PC-3 (cell line): ENCODE measurements at regions of chr11 and their contacts with region 1.

Region 1: GRCh38 chr11:130827451-130828377 is 88.6 kb downstream of the SNX19 start:
- DNase-seq: peak; percentile 93
- ATAC-seq: peak; percentile 95
- H3K4me3 ChIP-seq: no peak overlapping the region
- H3K27ac ChIP-seq: peak overlapping the region; percentile 58
- H3K4me1 ChIP-seq: peaks cover 23% of the 10 kb centered on the region
- H3K27me3 ChIP-seq: no peaks in the 10 kb centered on the region
- CTCF ChIP-seq: peak; percentile 89

Region 2: GRCh38 chr11:130448416-130449309 is 379.1 kb before region 1 on chr11 and contains the start of gene ADAMTS15:
- CTCF ChIA-PET with region 1: interaction called, 10 read pairs
- POLR2A ChIA-PET with region 1: no interaction called
- intact Hi-C with region 1: no loop called
- DNase-seq: peak; percentile 97
- ATAC-seq: peak; percentile 91
- H3K4me3 ChIP-seq: peak within 1 kb of the TSS; percentile 94
- H3K27ac ChIP-seq: peak within 1 kb of the TSS; percentile 52
- H3K4me1 ChIP-seq: peaks cover 34% of the 10 kb centered on the region
- H3K27me3 ChIP-seq: no peaks in the 10 kb centered on the region
- CTCF ChIP-seq: no peak
- total RNA-seq, gene ADAMTS15: 16.8 and 21.7 TPM in 2 replicates

Region 3: GRCh38 chr11:130666781-130667251 is 160.9 kb before region 1 on chr11:
- CTCF ChIA-PET with region 1: no interaction called
- POLR2A ChIA-PET with region 1: no interaction called
- intact Hi-C with region 1: loop called (anchors 5 kb)
- DNase-seq: peak; percentile 36
- ATAC-seq: peak; percentile 77
- H3K4me3 ChIP-seq: no peak overlapping the region
- H3K27ac ChIP-seq: peak overlapping the region; percentile 9; the same call in 1 of the 2 replicates
- H3K4me1 ChIP-seq: peaks cover 9% of the 10 kb centered on the region
- H3K27me3 ChIP-seq: no peaks in the 10 kb centered on the region
- CTCF ChIP-seq: peak; percentile 36

Region 4: GRCh38 chr11:130691581-130691980 is 136.1 kb before region 1 on chr11:
- CTCF ChIA-PET with region 1: no interaction called
- POLR2A ChIA-PET with region 1: no interaction called
- intact Hi-C with region 1: no loop called
- DNase-seq: no peak
- ATAC-seq: no peak
- H3K4me3 ChIP-seq: no peak overlapping the region
- H3K27ac ChIP-seq: no peak overlapping the region
- H3K4me1 ChIP-seq: peaks cover 9% of the 10 kb centered on the region
- H3K27me3 ChIP-seq: no peaks in the 10 kb centered on the region
- CTCF ChIP-seq: no peak

Region 5: GRCh38 chr11:130861902-130862860 is 34.5 kb after region 1 on chr11:
- CTCF ChIA-PET with region 1: interaction called, 3 read pairs
- POLR2A ChIA-PET with region 1: no interaction called
- intact Hi-C with region 1: loop called (anchors 2 kb)
- DNase-seq: peak; percentile 97
- ATAC-seq: peak; percentile 85
- H3K4me3 ChIP-seq: no peak overlapping the region
- H3K27ac ChIP-seq: peak overlapping the region; percentile 23
- H3K4me1 ChIP-seq: peaks cover 4% of the 10 kb centered on the region
- H3K27me3 ChIP-seq: no peaks in the 10 kb centered on the region
- CTCF ChIP-seq: peak; percentile 100

Region 6: GRCh38 chr11:131790586-131790985 is 962.9 kb after region 1 on chr11:
- CTCF ChIA-PET with region 1: no interaction called
- POLR2A ChIA-PET with region 1: no interaction called
- intact Hi-C with region 1: no loop called
- DNase-seq: no peak
- ATAC-seq: no peak
- H3K4me3 ChIP-seq: no peak overlapping the region
- H3K27ac ChIP-seq: no peak overlapping the region
- H3K4me1 ChIP-seq: no peaks in the 10 kb centered on the region
- H3K27me3 ChIP-seq: peaks cover 69% of the 10 kb centered on the region
- CTCF ChIP-seq: no peak